ENCODE measurements at regions of chr12 and their contacts with region 1.

Region 1: GRCh38 chr12:71663561-71664294 is at the start of gene ZFC3H1:
- DNase-seq: peak; percentile 83
- ATAC-seq: peak; percentile 87
- H3K4me3 Mint-ChIP-seq: peak within 1 kb of the TSS; percentile 100
- H3K27ac Mint-ChIP-seq: peak within 1 kb of the TSS; percentile 100
- H3K4me1 Mint-ChIP-seq: peaks cover 32% of the 10 kb centered on the region
- H3K27me3 Mint-ChIP-seq: no peaks in the 10 kb centered on the region
- total RNA-seq, gene ZFC3H1: 70.2 to 78.3 TPM

Region 2: GRCh38 chr12:71626098-71626497 is 37.6 kb before region 1 on chr12:
- POLR2A ChIA-PET with region 1: interaction called, 10 read pairs
- DNase-seq: no peak
- ATAC-seq: no peak
- H3K4me3 Mint-ChIP-seq: peak overlapping the region; percentile 37
- H3K27ac Mint-ChIP-seq: peak overlapping the region; percentile 67
- H3K4me1 Mint-ChIP-seq: peaks cover 16% of the 10 kb centered on the region
- H3K27me3 Mint-ChIP-seq: no peaks in the 10 kb centered on the region

Region 3: DNA sequence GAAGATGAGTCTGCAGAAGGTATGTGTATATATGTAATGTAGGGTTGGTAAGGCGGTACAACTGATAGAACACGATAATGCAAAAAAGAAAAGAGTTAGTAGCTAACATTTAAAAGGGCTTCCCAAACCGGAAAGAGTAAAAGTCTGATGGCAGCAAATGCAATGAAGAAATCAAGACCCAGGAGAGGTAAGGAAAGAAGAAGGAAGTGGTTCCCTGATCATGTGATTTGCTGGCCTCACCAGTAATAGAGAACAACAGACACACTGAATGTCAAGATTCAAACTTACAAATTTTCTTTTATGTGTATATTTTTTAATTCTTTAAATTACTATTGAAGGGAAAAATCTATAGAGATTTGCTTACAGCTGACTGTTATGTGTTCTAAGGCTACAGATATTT is 18.5 kb before region 1 on chr12:
- POLR2A ChIA-PET with region 1: interaction called, 14 read pairs
- DNase-seq: no peak
- ATAC-seq: no peak
- H3K4me3 Mint-ChIP-seq: no peak overlapping the region
- H3K27ac Mint-ChIP-seq: peak overlapping the region; percentile 59
- H3K4me1 Mint-ChIP-seq: peaks cover 14% of the 10 kb centered on the region
- H3K27me3 Mint-ChIP-seq: no peaks in the 10 kb centered on the region

Region 4: DNA sequence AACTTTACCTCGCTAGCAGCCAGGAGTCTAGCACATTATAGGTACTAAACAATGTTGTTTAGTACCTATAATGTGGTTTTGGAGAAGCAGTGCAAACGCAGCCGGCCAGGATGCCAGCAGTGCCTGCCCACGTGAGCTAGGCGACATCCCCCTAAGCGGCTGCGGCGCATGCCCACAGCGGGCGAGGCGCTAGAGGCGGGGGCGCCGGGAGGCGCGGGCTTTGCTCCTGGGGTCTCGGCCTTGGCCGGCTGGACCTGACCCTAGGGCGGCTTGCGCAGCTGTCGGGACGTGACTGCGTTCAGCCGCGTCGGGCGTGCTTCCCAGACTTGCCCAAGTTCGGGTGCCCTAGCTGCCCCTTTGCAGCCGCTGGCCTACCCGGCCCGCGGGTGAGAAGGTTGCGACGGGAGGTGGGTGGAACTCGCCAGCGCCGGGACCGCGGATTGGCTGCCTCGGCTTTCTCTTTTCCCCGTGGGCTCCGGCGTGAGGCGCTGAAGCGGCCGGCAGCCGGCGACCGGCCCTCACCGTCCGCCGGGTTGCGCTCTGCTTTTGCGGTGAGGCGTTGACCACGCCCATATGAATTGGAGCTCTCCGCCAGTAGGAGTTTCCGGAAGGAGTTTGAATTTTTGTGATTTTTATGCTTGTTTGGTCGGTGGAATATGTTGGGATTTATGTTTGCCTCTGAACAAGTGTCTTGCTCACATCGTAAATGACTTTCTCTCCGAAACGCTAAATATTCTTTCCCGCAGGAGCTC is 22.4 kb after region 1 on chr12 and contains the start of gene TMEM19:
- POLR2A ChIA-PET with region 1: interaction called, 127 read pairs
- DNase-seq: peak; percentile 87
- ATAC-seq: peak; percentile 95
- H3K4me3 Mint-ChIP-seq: peak within 1 kb of the TSS; percentile 98
- H3K27ac Mint-ChIP-seq: peak within 1 kb of the TSS; percentile 98
- H3K4me1 Mint-ChIP-seq: peaks cover 18% of the 10 kb centered on the region
- H3K27me3 Mint-ChIP-seq: no peaks in the 10 kb centered on the region
- total RNA-seq, gene TMEM19: 17.0 to 18.5 TPM

Region 5: GRCh38 chr12:71754461-71755145 is 90.9 kb after region 1 on chr12 and contains the start of gene RAB21:
- POLR2A ChIA-PET with region 1: interaction called, 36 read pairs
- DNase-seq: peak; percentile 98
- ATAC-seq: peak; percentile 95
- H3K4me3 Mint-ChIP-seq: peak within 1 kb of the TSS; percentile 93
- H3K27ac Mint-ChIP-seq: peak within 1 kb of the TSS; percentile 94
- H3K4me1 Mint-ChIP-seq: peaks cover 22% of the 10 kb centered on the region
- H3K27me3 Mint-ChIP-seq: peaks cover 22% of the 10 kb centered on the region
- total RNA-seq, gene RAB21: 63.8 to 66.3 TPM

Measured in activated naive CD8-positive, alpha-beta T cell treated with anti-CD3 and anti-CD28 coated beads, Interleukin-2, amount 10 ng/mL, durations not matched to agents 7 days and 5 days (primary cell).